ENCODE measurements at regions of chr3 and their contacts with region 1.

Region 1: DNA sequence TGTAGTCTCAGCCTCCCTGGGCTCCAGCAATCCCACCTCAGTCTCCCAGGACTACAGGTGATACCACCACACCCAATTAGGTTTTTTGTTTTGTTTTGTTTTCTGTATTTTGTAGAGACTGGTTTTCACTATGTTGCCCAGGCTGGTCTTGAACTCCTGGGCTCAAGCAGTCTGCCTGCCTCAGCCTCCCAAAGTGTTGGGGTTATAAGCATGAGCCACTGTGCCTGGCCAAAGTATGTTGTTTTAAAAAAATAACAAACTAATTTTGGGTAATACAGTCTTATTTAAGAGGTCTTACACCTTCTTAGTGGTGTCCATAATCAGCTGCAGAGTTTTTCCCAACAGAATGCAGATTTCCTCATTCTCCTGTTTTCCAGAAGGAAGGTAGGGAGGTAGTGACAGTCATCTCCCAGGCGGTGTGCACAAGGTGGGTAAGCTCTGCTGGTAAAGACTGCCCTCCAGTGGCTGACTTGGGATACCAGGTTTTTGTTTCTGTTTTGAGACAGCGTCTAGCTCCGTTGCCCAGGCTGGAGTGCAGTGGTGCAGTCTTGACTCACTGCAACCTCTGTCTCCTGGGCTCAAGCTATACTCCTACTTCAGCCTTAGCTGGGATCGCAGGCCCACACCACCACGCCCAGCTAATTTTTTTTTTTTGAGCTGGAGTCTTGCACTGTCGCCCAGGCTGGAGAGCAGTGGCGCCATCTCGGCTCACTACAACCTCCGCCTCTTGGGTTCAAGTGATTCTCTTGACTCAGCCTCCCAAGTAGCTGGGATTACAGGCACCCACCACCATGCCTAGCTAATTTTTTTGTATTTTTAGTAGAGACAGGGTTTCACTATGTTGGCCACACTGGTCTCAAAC is 58.4 kb downstream of the MAP6D1 start:
- DNase-seq: peak; percentile 63 to 79 (median 68)
- ATAC-seq: peak; percentile 98
- H3K4me3 ChIP-seq: no peak overlapping the region
- H3K27ac ChIP-seq: no peak overlapping the region
- H3K4me1 ChIP-seq: peaks cover 0 to 4% of the 10 kb centered on the region in 2 experiments; a peak in 2 of 5 replicates
- H3K27me3 ChIP-seq: no peaks in the 10 kb centered on the region
- CTCF ChIP-seq: peak; percentile 83 to 85 (median 84)
- EP300 ChIP-seq: no peak
- POLR2A ChIP-seq: no peak
- RAD21 ChIP-seq: peak; percentile 66 to 94; a peak in 3 of 4 replicates

Region 2: DNA sequence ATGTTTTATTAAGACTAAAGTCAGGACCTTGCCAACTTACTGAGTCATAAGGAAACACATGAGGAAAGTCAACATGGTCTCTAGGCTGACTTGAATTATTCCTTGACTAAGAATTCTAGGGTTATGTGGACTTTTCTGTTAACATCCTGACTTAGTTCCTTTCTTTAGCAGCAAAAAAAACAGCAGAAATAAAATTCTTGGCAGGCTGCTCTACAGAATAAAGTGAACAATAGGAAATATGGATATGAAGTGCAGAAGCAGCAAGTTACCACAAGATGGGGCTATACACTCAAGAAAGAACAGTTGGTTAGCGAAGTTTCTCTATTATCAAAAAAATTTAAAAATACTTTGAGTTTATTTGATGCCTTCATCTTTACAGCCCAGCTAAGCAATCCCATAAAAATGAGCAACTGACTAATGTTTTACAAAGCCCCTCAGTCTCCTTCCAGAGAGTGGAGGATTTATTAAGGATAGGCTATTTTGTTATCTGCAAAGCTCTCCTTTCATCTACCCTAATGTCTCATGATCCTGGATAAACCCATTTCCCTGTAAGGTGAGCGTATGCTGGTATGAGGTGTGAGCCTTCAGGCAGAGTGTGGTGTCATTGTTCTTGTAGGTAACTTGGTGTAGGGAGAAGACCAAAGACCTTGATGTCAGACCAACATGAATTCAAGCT is 644.6 kb before region 1 on chr3:
- CTCF ChIA-PET with region 1: no interaction called
- POLR2A ChIA-PET with region 1: no interaction called
- in situ Hi-C with region 1: loop called (anchors 25 kb)
- intact Hi-C with region 1: loop called (anchors 10 kb)
- DNase-seq: peak; percentile 54 to 67 (median 56)
- ATAC-seq: peak; percentile 73
- H3K4me3 ChIP-seq: no peak overlapping the region
- H3K27ac ChIP-seq: no peak overlapping the region
- H3K4me1 ChIP-seq: no peaks in the 10 kb centered on the region
- H3K27me3 ChIP-seq: peaks cover 0 to 5% of the 10 kb centered on the region in 2 experiments; a peak in 1 of 5 replicates
- CTCF ChIP-seq: peak; percentile 65 to 91 (median 69); a peak in 5 of 6 replicates
- EP300 ChIP-seq: no peak
- POLR2A ChIP-seq: no peak
- RAD21 ChIP-seq: peak; percentile 93

Region 3: GRCh38 chr3:183178629-183179549 is 588.1 kb before region 1 on chr3:
- CTCF ChIA-PET with region 1: interaction called, 3 read pairs
- POLR2A ChIA-PET with region 1: no interaction called
- in situ Hi-C with region 1: no loop called
- intact Hi-C with region 1: loop called (anchors 5 kb)
- DNase-seq: peak; percentile 65 to 69 (median 68)
- ATAC-seq: peak; percentile 92
- H3K4me3 ChIP-seq: peak overlapping the region; percentile 50
- H3K27ac ChIP-seq: no peak overlapping the region
- H3K4me1 ChIP-seq: peaks cover 0 to 25% of the 10 kb centered on the region in 2 experiments; a peak in 2 of 5 replicates
- H3K27me3 ChIP-seq: peaks cover 0 to 29% of the 10 kb centered on the region in 2 experiments; a peak in 3 of 5 replicates
- CTCF ChIP-seq: peak; percentile 55 to 90 (median 62); a peak in 5 of 6 replicates
- EP300 ChIP-seq: no peak
- POLR2A ChIP-seq: no peak
- RAD21 ChIP-seq: peak; percentile 47 to 58

Region 4: DNA sequence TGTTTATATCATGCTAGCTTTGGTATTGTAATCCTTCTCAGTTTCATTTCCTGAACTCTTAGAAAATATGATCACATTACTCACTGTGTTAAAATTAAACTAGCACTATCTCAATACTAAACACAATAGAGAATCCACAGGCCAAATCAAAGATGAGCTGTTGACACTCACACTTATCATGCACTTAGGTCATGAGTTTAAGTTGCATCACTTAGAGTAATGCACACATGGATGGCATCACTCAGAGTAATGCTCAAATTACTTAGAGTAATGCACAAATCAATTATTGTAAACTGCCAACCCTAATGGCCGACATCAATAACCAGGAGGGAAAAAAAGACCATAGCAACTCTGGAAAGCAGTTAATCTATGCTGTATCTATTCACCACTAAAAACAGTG is 298.6 kb before region 1 on chr3:
- CTCF ChIA-PET with region 1: interaction called, 3 read pairs
- POLR2A ChIA-PET with region 1: no interaction called
- in situ Hi-C with region 1: loop called (anchors 5 kb)
- intact Hi-C with region 1: loop called (anchors 1 kb)
- DNase-seq: no peak
- ATAC-seq: no peak
- H3K4me3 ChIP-seq: no peak overlapping the region
- H3K27ac ChIP-seq: no peak overlapping the region
- H3K4me1 ChIP-seq: no peaks in the 10 kb centered on the region
- H3K27me3 ChIP-seq: no peaks in the 10 kb centered on the region
- CTCF ChIP-seq: no peak
- EP300 ChIP-seq: no peak
- POLR2A ChIP-seq: no peak
- RAD21 ChIP-seq: no peak

Region 5: DNA sequence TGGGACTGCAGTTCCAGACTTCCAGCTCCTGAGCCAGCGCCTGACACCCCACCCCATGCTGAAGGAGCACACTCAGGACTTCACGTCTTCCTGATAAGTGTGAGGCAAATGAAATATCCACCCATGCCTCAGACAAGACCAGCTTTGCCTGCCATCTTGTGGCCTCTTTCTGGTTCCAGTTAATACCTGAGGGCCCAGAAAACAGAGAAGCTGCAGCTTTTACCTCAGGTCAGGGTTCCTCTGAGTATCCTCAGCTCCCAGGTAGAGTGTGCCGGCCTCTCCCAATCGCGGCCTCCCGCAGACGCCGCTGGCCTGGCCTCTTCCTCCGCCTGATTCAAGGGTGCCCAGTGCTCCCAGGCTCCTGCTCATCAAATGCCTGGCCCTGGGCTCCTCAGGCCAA is 206.4 kb before region 1 on chr3:
- CTCF ChIA-PET with region 1: no interaction called
- POLR2A ChIA-PET with region 1: no interaction called
- in situ Hi-C with region 1: no loop called
- intact Hi-C with region 1: loop called (anchors 1 kb)
- DNase-seq: peak in 1 of 4 experiments; percentile 64
- ATAC-seq: peak; percentile 87
- H3K4me3 ChIP-seq: no peak overlapping the region
- H3K27ac ChIP-seq: no peak overlapping the region
- H3K4me1 ChIP-seq: peaks cover 5 to 12% of the 10 kb centered on the region in 2 experiments; a peak in 4 of 5 replicates
- H3K27me3 ChIP-seq: no peaks in the 10 kb centered on the region
- CTCF ChIP-seq: peak; percentile 53 to 73 (median 59); a peak in 5 of 6 replicates
- EP300 ChIP-seq: no peak
- POLR2A ChIP-seq: no peak
- RAD21 ChIP-seq: peak; percentile 89 to 91

Region 6: DNA sequence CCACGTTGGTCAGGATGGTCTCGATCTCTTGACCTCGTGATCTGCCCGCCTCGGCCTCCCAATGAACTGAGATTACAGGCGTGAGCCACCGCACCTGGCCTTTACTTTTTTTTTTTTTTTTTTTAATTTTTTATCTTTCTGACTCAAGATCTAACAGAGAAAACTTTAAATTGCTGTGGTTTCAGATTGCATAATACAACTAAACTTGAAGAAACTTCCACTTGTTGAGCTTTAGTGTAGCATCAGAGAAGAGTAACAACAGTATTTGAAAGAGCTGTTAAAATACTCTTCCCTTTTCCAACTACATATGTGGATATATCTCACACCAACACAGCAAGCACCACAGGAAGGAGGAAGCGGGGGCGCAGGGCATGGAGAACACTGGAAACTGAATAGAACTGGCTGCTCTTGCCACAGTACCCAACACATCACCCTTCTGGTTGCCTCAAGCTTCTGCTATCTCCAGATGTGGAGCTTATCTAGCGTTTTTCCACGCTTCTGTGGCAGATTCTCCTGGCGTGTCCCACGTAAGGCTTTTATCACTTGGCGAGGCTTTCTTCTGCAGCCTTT is 13.0 kb after region 1 on chr3:
- CTCF ChIA-PET with region 1: no interaction called
- POLR2A ChIA-PET with region 1: no interaction called
- in situ Hi-C with region 1: no loop called
- intact Hi-C with region 1: no loop called
- DNase-seq: no peak
- ATAC-seq: no peak
- H3K4me3 ChIP-seq: no peak overlapping the region
- H3K27ac ChIP-seq: no peak overlapping the region
- H3K4me1 ChIP-seq: no peaks in the 10 kb centered on the region; a peak in 1 of 5 replicates
- H3K27me3 ChIP-seq: no peaks in the 10 kb centered on the region
- CTCF ChIP-seq: no peak
- EP300 ChIP-seq: no peak
- POLR2A ChIP-seq: no peak
- RAD21 ChIP-seq: no peak

Region 7: DNA sequence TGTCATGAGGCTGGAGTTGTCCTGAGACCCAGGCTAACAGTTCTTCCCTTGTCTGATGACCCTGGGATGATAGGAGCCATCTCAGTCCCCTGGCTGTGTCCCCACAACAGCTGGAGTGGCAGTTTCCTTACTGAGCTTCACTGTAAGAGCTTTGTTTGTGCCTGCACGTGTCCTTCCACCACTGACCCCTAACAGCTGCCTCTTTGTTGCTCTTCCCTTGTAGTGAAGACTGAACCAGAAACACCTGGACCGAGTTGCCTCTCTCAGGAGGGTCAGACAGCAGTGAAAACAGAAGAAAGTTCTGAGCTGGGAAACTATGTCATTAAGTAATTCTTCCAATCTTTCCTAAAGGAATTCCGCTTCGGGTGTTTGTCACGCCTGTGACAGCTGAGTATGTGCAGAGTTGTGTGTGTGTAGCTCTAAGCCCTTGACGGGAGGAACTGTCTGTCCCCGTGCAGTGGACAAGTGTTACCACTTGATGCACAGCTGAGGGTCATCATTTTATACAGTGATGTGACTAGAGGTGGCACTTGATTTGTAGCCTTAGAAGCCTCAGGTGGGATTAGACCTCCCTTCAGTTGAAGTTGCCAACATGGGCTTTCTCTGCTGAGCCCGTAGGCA is 33.4 kb after region 1 on chr3:
- CTCF ChIA-PET with region 1: no interaction called
- POLR2A ChIA-PET with region 1: no interaction called
- in situ Hi-C with region 1: no loop called
- intact Hi-C with region 1: no loop called
- DNase-seq: no peak
- ATAC-seq: no peak
- H3K4me3 ChIP-seq: no peak overlapping the region
- H3K27ac ChIP-seq: no peak overlapping the region
- H3K4me1 ChIP-seq: no peaks in the 10 kb centered on the region; a peak in 2 of 5 replicates
- H3K27me3 ChIP-seq: no peaks in the 10 kb centered on the region
- CTCF ChIP-seq: no peak
- EP300 ChIP-seq: no peak
- POLR2A ChIP-seq: no peak
- RAD21 ChIP-seq: no peak

Measured in K562 (cell line).